A549 (cell line): ENCODE measurements at regions of chr9 and their contacts with region 1.

Region 1: GRCh38 chr9:33225319-33226149 is 14.4 kb upstream of the SPINK4 start:
- DNase-seq: peak in 1 of 2 experiments; percentile 83
- ATAC-seq: 0 out of 6 replicates have a peak, but pooled peaks of 1 of the 2 experiments have one; percentile 8
- H3K4me3 ChIP-seq: no peak overlapping the region
- H3K27ac ChIP-seq: peak overlapping the region; percentile 46 to 67
- H3K4me1 ChIP-seq: peaks cover 54% of the 10 kb centered on the region
- CTCF ChIP-seq: peak; percentile 95
- EP300 ChIP-seq: no peak
- POLR2A ChIP-seq: no peak
- RAD21 ChIP-seq: peak; percentile 94 to 96

Region 2: GRCh38 chr9:33076358-33077004 is 149.1 kb before region 1 on chr9 and contains the start of gene SMU1:
- CTCF ChIA-PET with region 1: interaction called, 127 read pairs
- POLR2A ChIA-PET with region 1: no interaction called
- DNase-seq: peak; percentile 96 to 99
- ATAC-seq: peak; percentile 97 to 99
- H3K4me3 ChIP-seq: peak within 1 kb of the TSS; percentile 71
- H3K27ac ChIP-seq: peak within 1 kb of the TSS; percentile 82 to 93
- H3K4me1 ChIP-seq: peaks cover 14% of the 10 kb centered on the region; the same call in 2 of the 3 replicates
- CTCF ChIP-seq: no peak
- EP300 ChIP-seq: no peak
- POLR2A ChIP-seq: peak; percentile 70
- RAD21 ChIP-seq: no peak
- polyA plus RNA-seq, gene SMU1: 25.3 and 26.0 TPM in 2 replicates

Region 3: GRCh38 chr9:33151007-33151557 is 74.5 kb before region 1 on chr9:
- CTCF ChIA-PET with region 1: interaction called, 10 read pairs
- POLR2A ChIA-PET with region 1: no interaction called
- DNase-seq: peak in 1 of 2 experiments; percentile 53
- ATAC-seq: peak; percentile 87 to 90
- H3K4me3 ChIP-seq: peak overlapping the region; percentile 19; the same call in 2 of the 3 replicates
- H3K27ac ChIP-seq: peak overlapping the region; percentile 73 to 87
- H3K4me1 ChIP-seq: peaks cover 98% of the 10 kb centered on the region
- CTCF ChIP-seq: no peak
- EP300 ChIP-seq: no peak
- POLR2A ChIP-seq: no peak
- RAD21 ChIP-seq: no peak

Region 4: DNA sequence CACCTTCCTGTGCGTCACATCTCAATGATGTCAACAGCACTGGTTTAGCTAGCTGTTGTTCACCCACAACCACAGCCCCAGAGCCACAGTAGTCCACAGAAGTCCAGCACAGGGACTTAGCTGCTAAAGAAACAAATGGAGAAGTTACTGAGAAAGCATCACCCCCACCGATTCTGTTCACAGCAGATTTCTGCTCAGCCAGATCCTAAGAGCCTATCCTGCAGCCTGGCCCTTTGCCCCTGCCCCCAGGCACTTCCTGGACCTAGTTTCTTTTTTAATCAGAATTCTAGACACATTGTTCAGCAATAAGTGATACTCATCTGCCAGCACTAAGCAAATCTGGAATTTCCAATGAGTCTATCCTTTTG is 65.8 kb before region 1 on chr9:
- CTCF ChIA-PET with region 1: interaction called, 17 read pairs
- POLR2A ChIA-PET with region 1: no interaction called
- DNase-seq: peak in 1 of 2 experiments; percentile 66
- ATAC-seq: peak in 1 of 2 experiments; percentile 3; a peak in 2 of 6 replicates
- H3K4me3 ChIP-seq: peak overlapping the region; percentile 32
- H3K27ac ChIP-seq: peak overlapping the region; percentile 95 to 97
- H3K4me1 ChIP-seq: peaks cover 90% of the 10 kb centered on the region
- CTCF ChIP-seq: no peak
- EP300 ChIP-seq: no peak
- POLR2A ChIP-seq: no peak
- RAD21 ChIP-seq: no peak

Region 5: GRCh38 chr9:33167046-33167808 is 58.3 kb before region 1 on chr9 and contains the start of gene B4GALT1:
- CTCF ChIA-PET with region 1: interaction called, 10 read pairs
- POLR2A ChIA-PET with region 1: interaction called, 4 read pairs
- DNase-seq: peak; percentile 86 to 87
- ATAC-seq: peak; percentile 65 to 75
- H3K4me3 ChIP-seq: peak within 1 kb of the TSS; percentile 86
- H3K27ac ChIP-seq: peak within 1 kb of the TSS; percentile 95 to 97
- H3K4me1 ChIP-seq: peaks cover 48% of the 10 kb centered on the region
- CTCF ChIP-seq: no peak; the same call in 2 of the 3 replicates
- EP300 ChIP-seq: no peak; a peak in 1 of 5 replicates
- POLR2A ChIP-seq: peak; percentile 99
- RAD21 ChIP-seq: peak in 1 of 2 experiments; percentile 37; a peak in 1 of 5 replicates
- polyA plus RNA-seq, gene B4GALT1: 180 and 191 TPM in 2 replicates

Region 6: DNA sequence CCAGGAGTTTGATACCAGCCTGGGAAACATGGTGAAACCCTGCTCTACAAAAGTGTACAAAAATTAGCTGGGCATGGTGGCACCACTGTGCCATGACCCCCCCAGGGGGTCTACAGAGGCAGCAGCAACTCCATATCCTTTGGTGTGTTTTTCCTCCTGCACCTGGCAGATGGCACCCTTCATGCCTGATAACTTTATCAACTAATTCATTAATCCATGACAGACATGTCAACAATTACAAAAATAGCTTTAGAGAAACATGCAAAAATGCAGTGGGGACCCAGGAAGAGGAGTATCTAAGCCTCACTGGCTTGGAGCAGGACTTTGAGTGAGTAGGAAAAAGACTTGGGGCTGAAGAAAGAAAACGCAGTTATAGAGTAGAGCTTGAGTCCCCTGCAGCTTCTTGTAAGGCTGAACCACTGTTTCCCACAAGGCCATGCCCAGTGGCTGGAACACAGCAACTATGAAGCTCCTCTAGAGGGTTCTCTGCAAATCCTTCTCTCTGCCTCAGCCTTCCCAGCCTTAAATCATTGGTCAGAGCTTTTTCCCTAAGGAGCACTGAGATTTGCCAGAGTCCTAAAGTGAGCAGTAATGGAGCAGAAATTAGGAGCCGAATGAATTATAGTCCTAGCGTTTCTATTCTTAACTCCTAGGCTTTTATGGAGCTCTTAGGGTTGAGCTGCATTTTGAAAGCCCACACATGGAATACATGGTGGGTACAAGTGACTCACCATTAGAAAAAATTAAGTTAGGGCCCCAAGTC is 32.9 kb before region 1 on chr9:
- CTCF ChIA-PET with region 1: interaction called, 16 read pairs
- POLR2A ChIA-PET with region 1: no interaction called
- DNase-seq: no peak
- ATAC-seq: peak in 1 of 2 experiments; percentile 38; a peak in 1 of 6 replicates
- H3K4me3 ChIP-seq: no peak overlapping the region
- H3K27ac ChIP-seq: no peak overlapping the region
- H3K4me1 ChIP-seq: no peaks in the 10 kb centered on the region
- CTCF ChIP-seq: no peak
- EP300 ChIP-seq: no peak
- POLR2A ChIP-seq: no peak
- RAD21 ChIP-seq: no peak

Region 7: GRCh38 chr9:33466565-33467495 is 241.3 kb after region 1 on chr9:
- CTCF ChIA-PET with region 1: interaction called, 32 read pairs
- POLR2A ChIA-PET with region 1: no interaction called
- DNase-seq: peak; percentile 55 to 75
- ATAC-seq: peak; percentile 74 to 90
- H3K4me3 ChIP-seq: no peak overlapping the region
- H3K27ac ChIP-seq: peak overlapping the region in 1 of 2 experiments; percentile 57; a peak in 2 of 6 replicates
- H3K4me1 ChIP-seq: peaks cover 4% of the 10 kb centered on the region
- CTCF ChIP-seq: peak; percentile 88
- EP300 ChIP-seq: no peak
- POLR2A ChIP-seq: no peak
- RAD21 ChIP-seq: peak; percentile 90 to 92